ENCODE measurements at regions of chr1 and their contacts with region 1.

Region 1: DNA sequence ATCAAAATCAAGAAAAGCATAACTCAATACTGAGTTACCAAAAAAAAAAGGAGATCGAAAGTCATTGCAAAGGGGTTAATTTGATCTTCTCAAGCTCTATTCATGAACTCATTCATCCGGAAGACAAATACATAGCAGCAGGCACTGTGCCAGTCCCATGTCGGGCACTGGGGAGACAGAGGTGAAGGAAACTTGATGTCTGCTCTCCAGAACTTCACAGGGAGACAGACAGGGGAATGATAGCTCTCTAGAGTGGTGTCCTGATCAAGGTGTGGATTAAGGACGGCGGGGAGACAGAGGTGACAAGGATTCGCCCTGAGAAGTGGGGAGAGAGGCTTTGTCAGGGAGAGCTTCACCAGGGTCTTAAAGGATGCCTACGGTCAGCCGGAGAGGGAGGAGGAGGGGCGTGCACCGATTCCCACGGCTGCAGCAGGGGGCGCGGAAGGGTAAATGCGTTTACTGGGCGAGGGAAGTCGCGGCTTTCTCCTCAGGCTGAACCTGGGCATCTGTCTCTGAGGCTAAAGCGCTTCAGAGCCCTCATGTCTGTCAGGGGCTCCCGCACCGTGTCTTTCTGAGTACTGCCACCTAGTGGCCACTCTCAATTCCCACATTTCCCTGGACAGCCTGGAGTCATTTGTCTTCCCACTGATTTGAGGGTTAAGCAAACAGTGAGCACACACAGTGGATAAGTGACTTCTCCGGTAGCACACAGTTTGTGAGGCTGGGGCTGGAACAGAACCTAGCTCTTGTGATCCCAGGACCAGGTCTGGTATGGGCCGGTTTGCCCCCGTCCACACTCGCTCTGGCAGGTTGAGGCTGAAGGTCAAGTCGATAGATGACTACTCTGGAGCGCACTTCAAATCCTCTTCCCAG is 152.8 kb downstream of the TENT5C start:
- DNase-seq: peak; percentile 11
- ATAC-seq: peak; percentile 98
- H3K4me3 ChIP-seq: no peak overlapping the region
- H3K27ac ChIP-seq: no peak overlapping the region
- H3K4me1 ChIP-seq: no peaks in the 10 kb centered on the region; the same call in none of the 2 replicates
- H3K27me3 ChIP-seq: peaks cover 0 to 2% of the 10 kb centered on the region in 2 experiments; a peak in 2 of 4 replicates
- CTCF ChIP-seq: peak; percentile 78 to 80 (median 79)
- EP300 ChIP-seq: no peak
- POLR2A ChIP-seq: no peak
- RAD21 ChIP-seq: peak; percentile 66

Region 2: DNA sequence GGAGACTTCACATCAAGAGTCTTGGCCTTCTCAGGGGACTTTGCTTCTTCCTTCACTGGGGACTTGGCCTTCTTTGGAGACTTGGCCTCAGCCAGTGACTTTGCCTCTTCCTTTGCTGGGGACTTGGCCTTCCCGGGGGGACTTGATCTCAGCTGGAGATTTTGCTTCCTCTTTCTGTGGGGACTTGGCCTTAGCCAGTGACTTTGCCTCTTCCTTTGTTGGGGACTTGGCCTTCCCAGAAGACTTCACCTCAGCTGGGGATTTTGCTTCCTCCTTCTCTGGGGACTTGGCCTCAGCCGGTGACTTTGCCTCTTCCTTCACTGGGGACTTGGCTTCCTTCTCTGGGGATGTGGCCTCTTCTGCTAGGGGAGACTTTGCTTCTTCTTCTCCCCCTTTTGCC is 1017.9 kb before region 1 on chr1:
- CTCF ChIA-PET with region 1: no interaction called
- POLR2A ChIA-PET with region 1: no interaction called
- RAD21 ChIA-PET with region 1: no interaction called
- SMC1A ChIA-PET with region 1: no interaction called
- in situ Hi-C with region 1: no loop called
- intact Hi-C with region 1: no loop called
- DNase-seq: no peak
- ATAC-seq: no peak
- H3K4me3 ChIP-seq: no peak overlapping the region
- H3K27ac ChIP-seq: peak overlapping the region; percentile 31; the same call in 1 of the 2 replicates
- H3K4me1 ChIP-seq: peaks cover 39% of the 10 kb centered on the region
- H3K27me3 ChIP-seq: no peaks in the 10 kb centered on the region
- CTCF ChIP-seq: no peak
- EP300 ChIP-seq: no peak
- POLR2A ChIP-seq: no peak
- RAD21 ChIP-seq: no peak

Region 3: DNA sequence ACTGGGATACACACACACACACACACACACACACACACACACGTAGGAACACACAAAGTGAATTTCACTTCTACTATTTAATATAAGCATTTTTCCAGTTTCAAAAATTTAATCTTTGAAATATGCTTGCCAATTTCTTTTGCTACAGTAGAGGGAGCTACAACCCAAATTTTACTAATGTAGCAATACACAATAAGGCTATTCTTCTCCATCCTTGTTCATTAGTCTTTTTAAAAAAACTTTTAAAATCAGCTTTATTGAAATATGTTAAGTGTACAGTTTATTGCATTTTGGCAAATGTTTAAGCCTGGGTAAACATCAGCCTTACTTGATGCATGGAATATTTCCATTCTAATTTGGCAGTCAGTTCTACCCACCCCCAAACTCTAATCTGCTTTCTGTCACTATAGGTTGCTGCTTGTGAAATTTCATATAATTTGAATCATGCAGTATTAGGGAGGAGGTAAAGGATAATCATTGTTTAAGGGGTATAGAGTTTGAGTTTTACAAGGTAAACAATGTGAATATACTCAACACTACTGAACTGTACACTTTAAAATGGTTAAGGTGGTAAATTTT is 245.8 kb before region 1 on chr1:
- CTCF ChIA-PET with region 1: interaction called, 142 read pairs
- POLR2A ChIA-PET with region 1: no interaction called
- RAD21 ChIA-PET with region 1: interaction called, 21 read pairs
- SMC1A ChIA-PET with region 1: interaction called, 24 read pairs
- in situ Hi-C with region 1: no loop called
- intact Hi-C with region 1: loop called (anchors 1 kb)
- DNase-seq: no peak
- ATAC-seq: peak; percentile 41; the same call in 1 of the 3 replicates
- H3K4me3 ChIP-seq: no peak overlapping the region
- H3K27ac ChIP-seq: no peak overlapping the region
- H3K4me1 ChIP-seq: no peaks in the 10 kb centered on the region
- H3K27me3 ChIP-seq: no peaks in the 10 kb centered on the region
- CTCF ChIP-seq: peak; percentile 42 to 66 (median 48); a peak in 5 of 6 replicates
- EP300 ChIP-seq: no peak
- POLR2A ChIP-seq: no peak
- RAD21 ChIP-seq: peak; percentile 66

Region 4: DNA sequence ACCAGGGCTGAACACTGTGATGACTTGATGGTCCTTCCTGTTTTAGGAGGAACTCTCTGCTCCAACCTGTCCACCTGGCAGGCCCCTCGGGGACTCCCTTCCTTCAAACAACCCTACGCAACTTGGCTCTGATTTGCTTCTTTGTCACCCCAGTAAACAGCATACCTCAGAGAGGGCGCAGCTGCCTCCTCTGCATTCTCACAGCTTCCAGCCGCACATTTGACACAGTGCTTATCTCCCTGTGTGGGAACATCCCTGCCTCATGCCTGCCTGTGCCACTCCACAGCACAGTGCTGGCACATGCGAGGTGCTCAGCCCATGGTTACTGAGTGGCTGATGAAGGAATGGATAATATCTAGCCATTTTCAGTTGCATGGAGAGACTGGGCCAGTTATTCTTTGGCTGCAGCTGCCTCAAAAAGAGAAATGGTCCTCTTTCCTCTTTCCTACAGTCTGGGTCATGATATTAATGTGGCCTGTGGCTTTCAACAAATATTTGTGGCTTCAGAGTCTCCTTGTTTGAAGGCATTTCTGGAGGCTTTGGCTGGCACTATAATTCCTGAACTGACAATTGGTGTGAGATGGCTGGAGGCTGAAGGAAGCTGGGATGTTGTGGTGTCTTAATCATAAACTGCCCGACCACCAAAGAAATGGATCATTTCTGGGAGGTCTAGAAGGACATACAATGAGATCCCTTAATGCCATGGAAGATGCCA is 75.0 kb before region 1 on chr1:
- CTCF ChIA-PET with region 1: interaction called, 5 read pairs
- POLR2A ChIA-PET with region 1: no interaction called
- RAD21 ChIA-PET with region 1: no interaction called
- SMC1A ChIA-PET with region 1: interaction called, 3 read pairs
- in situ Hi-C with region 1: no loop called
- intact Hi-C with region 1: loop called (anchors 5 kb)
- DNase-seq: no peak
- ATAC-seq: no peak
- H3K4me3 ChIP-seq: no peak overlapping the region
- H3K27ac ChIP-seq: no peak overlapping the region
- H3K4me1 ChIP-seq: no peaks in the 10 kb centered on the region
- H3K27me3 ChIP-seq: peaks cover 0 to 12% of the 10 kb centered on the region in 2 experiments; a peak in 3 of 4 replicates
- CTCF ChIP-seq: no peak
- EP300 ChIP-seq: no peak
- POLR2A ChIP-seq: no peak
- RAD21 ChIP-seq: no peak

Region 5: DNA sequence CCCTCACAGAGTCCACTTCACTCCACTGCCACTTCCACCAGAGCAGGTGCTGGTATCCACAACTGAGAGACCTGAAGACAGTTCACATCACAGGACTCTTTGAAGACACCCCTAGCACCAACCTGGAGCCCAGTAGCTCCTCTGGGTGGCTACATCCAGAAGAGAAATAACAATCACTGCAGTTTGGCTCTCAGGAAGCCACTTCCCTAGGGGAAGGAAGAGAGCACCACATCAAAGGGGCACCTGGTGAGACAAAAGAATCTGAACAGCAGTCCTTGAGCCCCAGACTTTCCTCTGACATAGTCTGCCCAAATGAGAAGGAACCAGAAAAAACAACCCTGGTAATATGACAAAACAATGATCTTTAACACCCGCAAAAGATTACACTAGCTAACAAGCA is 39.7 kb before region 1 on chr1:
- CTCF ChIA-PET with region 1: interaction called, 53 read pairs
- POLR2A ChIA-PET with region 1: no interaction called
- RAD21 ChIA-PET with region 1: no interaction called
- SMC1A ChIA-PET with region 1: no interaction called
- in situ Hi-C with region 1: no loop called
- intact Hi-C with region 1: loop called (anchors 5 kb)
- DNase-seq: no peak
- ATAC-seq: no peak
- H3K4me3 ChIP-seq: no peak overlapping the region
- H3K27ac ChIP-seq: no peak overlapping the region
- H3K4me1 ChIP-seq: no peaks in the 10 kb centered on the region
- H3K27me3 ChIP-seq: no peaks in the 10 kb centered on the region
- CTCF ChIP-seq: no peak
- EP300 ChIP-seq: no peak
- POLR2A ChIP-seq: no peak
- RAD21 ChIP-seq: no peak

Region 6: DNA sequence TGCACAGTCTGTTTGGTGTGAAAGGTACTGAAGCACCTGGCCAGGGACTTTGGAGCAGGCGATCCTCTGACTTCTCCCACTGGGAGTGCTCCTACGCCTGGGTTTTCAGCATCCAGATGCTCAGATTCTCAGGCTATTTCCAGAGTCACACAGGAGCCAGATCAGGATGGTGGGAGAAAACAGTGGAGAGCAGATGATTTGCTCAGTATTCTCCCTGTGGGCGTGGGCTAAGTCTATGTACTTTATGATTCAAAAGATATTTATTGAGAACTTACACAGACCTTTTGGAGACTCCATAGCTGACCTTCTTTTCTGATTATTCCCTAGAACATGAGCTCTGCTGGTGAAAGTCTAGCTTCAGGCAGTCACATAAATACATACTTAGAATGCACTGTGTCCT is 18.2 kb before region 1 on chr1:
- CTCF ChIA-PET with region 1: interaction called, 15 read pairs
- POLR2A ChIA-PET with region 1: no interaction called
- RAD21 ChIA-PET with region 1: no interaction called
- SMC1A ChIA-PET with region 1: no interaction called
- in situ Hi-C with region 1: no loop called
- intact Hi-C with region 1: no loop called
- DNase-seq: no peak
- ATAC-seq: no peak
- H3K4me3 ChIP-seq: no peak overlapping the region
- H3K27ac ChIP-seq: no peak overlapping the region
- H3K4me1 ChIP-seq: no peaks in the 10 kb centered on the region
- H3K27me3 ChIP-seq: no peaks in the 10 kb centered on the region; a peak in 1 of 4 replicates
- CTCF ChIP-seq: no peak
- EP300 ChIP-seq: no peak
- POLR2A ChIP-seq: no peak
- RAD21 ChIP-seq: no peak

Region 7: DNA sequence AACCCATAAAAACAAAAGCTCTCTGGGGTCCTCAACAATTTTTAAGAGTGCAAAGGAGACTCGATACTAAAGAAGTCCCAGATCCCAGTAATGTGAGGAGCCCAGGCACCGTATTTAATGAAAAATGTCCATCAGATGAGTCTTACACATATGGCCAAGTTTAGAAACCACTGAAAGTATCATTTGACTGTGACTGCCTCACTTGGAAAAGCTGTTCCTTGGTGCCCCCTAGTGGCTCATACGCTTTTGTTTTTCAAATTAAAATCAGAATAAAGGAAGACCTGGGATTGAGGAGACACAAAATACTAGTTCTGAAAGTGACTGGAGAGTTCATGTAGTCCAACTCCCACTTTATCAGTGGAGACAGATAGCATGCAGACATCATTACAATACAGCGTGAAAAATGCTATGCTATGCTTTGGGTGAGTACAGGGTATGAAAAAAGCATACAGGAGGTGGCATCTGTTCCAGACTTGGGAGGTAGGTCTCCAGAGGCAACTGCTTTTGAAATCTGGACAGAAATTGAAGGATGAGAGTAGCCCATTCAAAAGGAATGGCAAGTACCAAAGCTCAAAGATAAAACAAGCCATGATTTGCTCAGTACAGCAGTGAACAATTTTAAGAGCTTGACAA is 136.9 kb after region 1 on chr1:
- CTCF ChIA-PET with region 1: interaction called, 29 read pairs
- POLR2A ChIA-PET with region 1: interaction called, 5 read pairs
- RAD21 ChIA-PET with region 1: interaction called, 8 read pairs
- SMC1A ChIA-PET with region 1: interaction called, 17 read pairs
- in situ Hi-C with region 1: no loop called
- intact Hi-C with region 1: no loop called
- DNase-seq: peak; percentile 32
- ATAC-seq: peak; percentile 98
- H3K4me3 ChIP-seq: no peak overlapping the region
- H3K27ac ChIP-seq: no peak overlapping the region
- H3K4me1 ChIP-seq: no peaks in the 10 kb centered on the region
- H3K27me3 ChIP-seq: no peaks in the 10 kb centered on the region
- CTCF ChIP-seq: peak; percentile 73 to 82 (median 81); a peak in 5 of 6 replicates
- EP300 ChIP-seq: peak in 1 of 2 experiments; percentile 45; a peak in 1 of 4 replicates
- POLR2A ChIP-seq: no peak
- RAD21 ChIP-seq: peak; percentile 86

Region 8: GRCh38 chr1:117967477-117967876 is 208.8 kb after region 1 on chr1:
- CTCF ChIA-PET with region 1: no interaction called
- POLR2A ChIA-PET with region 1: no interaction called
- RAD21 ChIA-PET with region 1: no interaction called
- SMC1A ChIA-PET with region 1: no interaction called
- in situ Hi-C with region 1: no loop called
- intact Hi-C with region 1: no loop called
- DNase-seq: no peak
- ATAC-seq: no peak
- H3K4me3 ChIP-seq: no peak overlapping the region
- H3K27ac ChIP-seq: no peak overlapping the region
- H3K4me1 ChIP-seq: no peaks in the 10 kb centered on the region
- H3K27me3 ChIP-seq: no peaks in the 10 kb centered on the region
- CTCF ChIP-seq: no peak
- EP300 ChIP-seq: no peak
- POLR2A ChIP-seq: no peak
- RAD21 ChIP-seq: no peak